Panc1 (cell line): ENCODE measurements at regions of chr19 and their contacts with region 1.

Region 1: GRCh38 chr19:6125571-6125989 is 9.9 kb upstream of the ACSBG2 start:
- DNase-seq: peak; percentile 61
- ATAC-seq: peak; percentile 89
- H3K4me3 ChIP-seq: no peak overlapping the region
- H3K27ac ChIP-seq: no peak overlapping the region
- H3K4me1 ChIP-seq: no peaks in the 10 kb centered on the region
- H3K27me3 ChIP-seq: no peaks in the 10 kb centered on the region
- CTCF ChIP-seq: peak; percentile 85

Region 2: GRCh38 chr19:5790573-5791520 is 334.7 kb before region 1 on chr19 and contains the start of gene DUS3L:
- CTCF ChIA-PET with region 1: no interaction called
- POLR2A ChIA-PET with region 1: no interaction called
- in situ Hi-C with region 1: no loop called
- intact Hi-C with region 1: no loop called
- DNase-seq: peak; percentile 87
- ATAC-seq: peak; percentile 96
- H3K4me3 ChIP-seq: peak within 1 kb of the TSS; percentile 68 to 76
- H3K27ac ChIP-seq: peak within 1 kb of the TSS; percentile 90
- H3K4me1 ChIP-seq: no peaks in the 10 kb centered on the region
- H3K27me3 ChIP-seq: no peaks in the 10 kb centered on the region
- CTCF ChIP-seq: no peak
- total RNA-seq, gene DUS3L: 39.6 TPM

Region 3: DNA sequence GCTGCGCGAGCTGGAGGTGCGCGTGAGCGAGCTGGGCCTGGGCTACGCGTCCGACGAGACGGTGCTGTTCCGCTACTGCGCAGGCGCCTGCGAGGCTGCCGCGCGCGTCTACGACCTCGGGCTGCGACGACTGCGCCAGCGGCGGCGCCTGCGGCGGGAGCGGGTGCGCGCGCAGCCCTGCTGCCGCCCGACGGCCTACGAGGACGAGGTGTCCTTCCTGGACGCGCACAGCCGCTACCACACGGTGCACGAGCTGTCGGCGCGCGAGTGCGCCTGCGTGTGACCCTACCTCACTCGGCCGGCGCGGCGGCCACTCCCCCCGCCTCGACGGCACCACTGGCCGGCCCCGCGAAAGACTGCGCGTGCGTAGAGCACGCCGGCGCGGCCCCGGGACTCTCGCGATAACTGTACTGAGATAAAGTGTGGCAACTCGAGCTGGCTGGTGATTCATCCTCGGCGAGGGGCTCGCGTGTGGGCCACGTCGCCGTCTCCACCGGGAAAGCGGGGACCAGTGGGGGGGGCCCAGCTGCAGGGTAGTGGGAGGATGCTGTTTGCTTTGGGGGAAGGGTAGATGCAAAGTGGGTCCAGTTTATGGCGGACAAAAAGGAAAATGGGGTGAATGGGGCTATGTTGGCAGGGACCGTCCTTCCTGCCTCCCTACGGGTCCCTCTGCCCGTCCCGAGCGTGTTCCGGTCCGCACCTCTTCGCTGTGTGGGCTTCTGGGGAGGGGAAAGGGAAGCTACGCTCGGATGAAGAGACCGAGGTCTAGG is 297.5 kb before region 1 on chr19:
- CTCF ChIA-PET with region 1: no interaction called
- POLR2A ChIA-PET with region 1: no interaction called
- in situ Hi-C with region 1: no loop called
- intact Hi-C with region 1: no loop called
- DNase-seq: peak; percentile 67
- ATAC-seq: peak; percentile 83
- H3K4me3 ChIP-seq: peak overlapping the region; percentile 55 to 86
- H3K27ac ChIP-seq: peak overlapping the region; percentile 80
- H3K4me1 ChIP-seq: peaks cover 8% of the 10 kb centered on the region
- H3K27me3 ChIP-seq: no peaks in the 10 kb centered on the region
- CTCF ChIP-seq: no peak

Region 4: DNA sequence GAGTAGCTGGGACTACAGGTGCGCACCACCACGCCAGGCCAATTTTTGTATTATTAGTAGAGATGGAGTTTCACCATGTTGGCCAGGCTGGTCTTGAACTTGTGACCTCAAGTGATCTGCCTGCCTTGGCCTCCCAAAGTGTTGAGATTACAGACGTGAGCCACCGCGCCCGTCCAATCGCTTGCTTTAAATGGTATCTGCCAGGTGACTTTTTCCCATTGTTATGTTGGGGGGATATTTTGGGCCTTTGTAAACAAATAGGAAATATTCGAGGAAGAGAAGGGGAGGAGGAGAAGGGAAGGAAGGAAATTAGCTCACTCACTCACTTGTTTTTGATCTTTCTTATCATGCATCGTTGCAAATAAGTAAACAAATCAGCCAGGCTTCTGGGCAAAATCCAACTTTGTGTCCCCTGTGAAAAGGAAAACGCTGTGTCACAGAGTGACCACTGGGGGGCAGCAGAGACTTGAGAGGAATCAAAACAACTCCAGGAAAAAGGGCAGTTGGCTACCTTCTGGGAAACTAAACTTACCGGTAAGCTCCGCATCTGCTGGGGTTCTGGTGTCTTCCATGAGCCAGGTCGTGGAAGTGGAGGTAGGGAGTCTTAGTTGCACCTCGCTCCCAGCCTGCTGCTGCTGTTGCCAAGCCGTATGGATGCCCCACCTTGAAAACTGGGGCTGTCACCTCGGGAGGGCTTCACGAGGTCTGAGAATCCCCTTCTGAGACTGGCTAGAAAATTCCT is 138.3 kb before region 1 on chr19:
- CTCF ChIA-PET with region 1: interaction called, 3 read pairs
- POLR2A ChIA-PET with region 1: no interaction called
- in situ Hi-C with region 1: no loop called
- intact Hi-C with region 1: loop called (anchors 10 kb)
- DNase-seq: peak; percentile 57
- ATAC-seq: peak; percentile 54; the same call in 1 of the 2 replicates
- H3K4me3 ChIP-seq: peak overlapping the region; percentile 14 to 48; a peak in 3 of 4 replicates
- H3K27ac ChIP-seq: peak overlapping the region; percentile 34; the same call in 1 of the 2 replicates
- H3K4me1 ChIP-seq: peaks cover 8% of the 10 kb centered on the region; the same call in 1 of the 2 replicates
- H3K27me3 ChIP-seq: no peaks in the 10 kb centered on the region
- CTCF ChIP-seq: peak; percentile 89

Region 5: DNA sequence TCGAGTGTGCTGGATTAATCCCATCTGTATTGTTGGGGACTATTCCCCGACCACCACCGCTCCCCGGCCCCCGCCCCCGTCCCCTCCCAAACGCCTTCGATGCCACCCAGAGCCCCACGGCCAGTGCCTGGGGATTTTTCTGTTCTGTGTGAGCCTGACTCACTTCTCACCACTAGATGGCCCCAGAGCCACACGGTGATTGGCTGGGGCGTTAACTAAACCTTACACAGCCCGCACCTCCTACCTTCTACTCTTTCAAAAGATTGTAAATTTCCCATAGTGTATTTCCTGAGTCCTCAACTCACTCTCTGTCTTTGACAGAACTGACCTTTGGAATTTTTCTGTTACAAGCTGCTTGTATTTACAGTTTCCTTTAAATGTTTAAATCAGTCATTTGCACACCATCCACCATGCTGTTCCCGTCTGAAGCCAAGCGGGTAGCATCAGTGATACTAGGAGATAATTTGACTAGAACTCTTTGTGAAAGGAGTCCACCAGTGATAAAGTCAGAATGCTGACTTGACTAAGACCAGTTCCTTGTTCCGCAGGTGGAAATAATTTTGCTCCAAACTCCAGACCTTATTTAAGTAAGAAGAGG is 76.7 kb before region 1 on chr19:
- CTCF ChIA-PET with region 1: interaction called, 18 read pairs
- POLR2A ChIA-PET with region 1: no interaction called
- in situ Hi-C with region 1: no loop called
- intact Hi-C with region 1: loop called (anchors 1 kb)
- DNase-seq: peak; percentile 30
- ATAC-seq: peak; percentile 99
- H3K4me3 ChIP-seq: no peak overlapping the region
- H3K27ac ChIP-seq: no peak overlapping the region
- H3K4me1 ChIP-seq: 0 out of 2 replicates have a peak, but pooled peaks cover 3% of the 10 kb centered on the region
- H3K27me3 ChIP-seq: no peaks in the 10 kb centered on the region
- CTCF ChIP-seq: peak; percentile 84

Region 6: DNA sequence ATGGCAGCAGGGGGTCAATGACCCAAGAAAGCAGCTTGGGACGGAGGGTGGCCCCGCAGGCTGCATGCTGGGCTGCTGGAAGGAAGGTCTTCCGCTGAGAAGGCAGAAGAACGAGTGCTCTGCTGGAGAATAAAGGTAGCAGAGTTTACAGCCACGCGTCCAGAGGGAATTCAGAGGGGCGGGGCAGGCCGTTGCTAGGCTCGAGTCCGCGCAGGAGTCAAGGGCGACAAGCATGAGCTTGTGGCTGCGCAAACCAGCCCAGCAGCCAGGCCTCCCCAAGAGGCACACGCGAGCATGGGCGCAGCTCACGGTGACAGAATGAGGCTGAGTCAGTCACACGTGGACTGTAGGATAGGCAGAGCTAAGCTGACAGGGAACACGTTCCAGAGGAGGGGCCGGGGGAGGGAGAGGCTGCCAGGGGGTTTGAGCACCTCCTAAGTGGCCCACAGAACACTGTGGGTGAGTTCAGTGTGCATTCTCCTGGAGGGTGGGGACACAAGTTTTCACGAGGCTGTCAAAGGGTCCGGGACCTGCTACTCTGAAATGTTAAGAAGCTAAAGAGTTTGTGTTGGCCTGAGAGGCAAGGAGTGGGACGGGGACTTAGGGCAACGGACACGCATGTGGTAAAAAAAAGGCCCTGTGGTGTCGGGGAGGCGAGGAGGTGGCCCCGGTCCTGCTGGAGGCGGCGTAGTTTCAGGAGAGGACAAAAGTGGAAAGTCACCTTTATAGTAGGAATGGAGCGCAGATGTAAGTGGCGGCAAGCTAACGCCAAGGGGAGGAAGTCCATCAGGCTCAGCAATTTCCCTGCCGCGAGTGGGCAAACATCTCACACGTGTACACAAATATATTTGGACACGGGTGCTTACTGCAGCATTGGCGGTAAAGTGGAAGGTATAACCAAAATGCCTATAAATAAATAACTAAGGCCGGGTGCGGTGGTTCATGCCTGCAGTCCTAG is 33.0 kb before region 1 on chr19:
- CTCF ChIA-PET with region 1: interaction called, 13 read pairs
- POLR2A ChIA-PET with region 1: no interaction called
- in situ Hi-C with region 1: no loop called
- intact Hi-C with region 1: no loop called
- DNase-seq: no peak
- ATAC-seq: peak; percentile 86
- H3K4me3 ChIP-seq: peak overlapping the region; percentile 15 to 41; a peak in 3 of 4 replicates
- H3K27ac ChIP-seq: peak overlapping the region; percentile 49
- H3K4me1 ChIP-seq: peaks cover 14% of the 10 kb centered on the region
- H3K27me3 ChIP-seq: no peaks in the 10 kb centered on the region
- CTCF ChIP-seq: no peak

Region 7: DNA sequence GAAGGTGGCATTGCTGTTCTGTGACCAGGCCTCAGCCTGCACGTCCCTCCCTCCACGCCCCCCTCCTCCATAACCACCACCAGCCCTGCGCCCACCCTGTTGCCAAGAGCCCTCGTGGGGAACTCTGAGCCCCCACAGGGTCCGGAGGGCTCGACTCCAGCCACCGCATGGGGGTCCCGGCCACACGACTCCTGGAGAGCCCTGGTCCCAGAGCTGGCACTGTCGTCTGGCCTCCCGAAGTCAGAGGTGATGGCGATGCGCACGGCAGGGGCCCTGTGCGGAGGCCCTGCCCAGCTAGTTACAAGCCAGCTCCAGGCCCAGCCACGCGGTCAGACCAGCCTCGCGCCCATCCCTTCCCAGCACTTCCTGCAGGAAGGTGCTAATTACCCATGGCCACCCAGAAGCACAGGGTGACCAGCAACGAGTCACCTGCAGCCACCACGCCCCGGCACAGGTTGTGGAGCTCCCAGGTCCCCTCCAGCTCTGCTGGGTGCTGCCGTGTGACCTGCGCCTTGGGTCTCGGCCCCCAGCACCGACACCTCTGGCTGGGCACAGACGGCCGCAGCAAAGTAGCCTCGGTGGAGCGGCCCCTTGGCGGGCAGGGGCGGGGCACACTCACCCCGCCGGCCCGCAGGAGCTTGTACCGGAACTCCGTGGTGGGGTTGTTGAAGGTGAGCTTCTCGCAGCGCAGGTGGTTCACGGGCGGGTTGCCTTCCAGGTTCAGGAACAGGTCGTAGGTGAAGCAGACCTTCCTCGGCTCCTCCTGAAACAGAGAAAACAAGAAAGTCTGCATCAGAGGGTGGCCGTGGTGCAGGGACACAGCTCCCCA is 104.6 kb after region 1 on chr19:
- CTCF ChIA-PET with region 1: no interaction called
- POLR2A ChIA-PET with region 1: no interaction called
- in situ Hi-C with region 1: no loop called
- intact Hi-C with region 1: no loop called
- DNase-seq: no peak
- ATAC-seq: no peak
- H3K4me3 ChIP-seq: no peak overlapping the region
- H3K27ac ChIP-seq: no peak overlapping the region
- H3K4me1 ChIP-seq: no peaks in the 10 kb centered on the region
- H3K27me3 ChIP-seq: no peaks in the 10 kb centered on the region
- CTCF ChIP-seq: no peak